ENCODE measurements at regions of chr2 and their contacts with region 1.

Region 1: DNA sequence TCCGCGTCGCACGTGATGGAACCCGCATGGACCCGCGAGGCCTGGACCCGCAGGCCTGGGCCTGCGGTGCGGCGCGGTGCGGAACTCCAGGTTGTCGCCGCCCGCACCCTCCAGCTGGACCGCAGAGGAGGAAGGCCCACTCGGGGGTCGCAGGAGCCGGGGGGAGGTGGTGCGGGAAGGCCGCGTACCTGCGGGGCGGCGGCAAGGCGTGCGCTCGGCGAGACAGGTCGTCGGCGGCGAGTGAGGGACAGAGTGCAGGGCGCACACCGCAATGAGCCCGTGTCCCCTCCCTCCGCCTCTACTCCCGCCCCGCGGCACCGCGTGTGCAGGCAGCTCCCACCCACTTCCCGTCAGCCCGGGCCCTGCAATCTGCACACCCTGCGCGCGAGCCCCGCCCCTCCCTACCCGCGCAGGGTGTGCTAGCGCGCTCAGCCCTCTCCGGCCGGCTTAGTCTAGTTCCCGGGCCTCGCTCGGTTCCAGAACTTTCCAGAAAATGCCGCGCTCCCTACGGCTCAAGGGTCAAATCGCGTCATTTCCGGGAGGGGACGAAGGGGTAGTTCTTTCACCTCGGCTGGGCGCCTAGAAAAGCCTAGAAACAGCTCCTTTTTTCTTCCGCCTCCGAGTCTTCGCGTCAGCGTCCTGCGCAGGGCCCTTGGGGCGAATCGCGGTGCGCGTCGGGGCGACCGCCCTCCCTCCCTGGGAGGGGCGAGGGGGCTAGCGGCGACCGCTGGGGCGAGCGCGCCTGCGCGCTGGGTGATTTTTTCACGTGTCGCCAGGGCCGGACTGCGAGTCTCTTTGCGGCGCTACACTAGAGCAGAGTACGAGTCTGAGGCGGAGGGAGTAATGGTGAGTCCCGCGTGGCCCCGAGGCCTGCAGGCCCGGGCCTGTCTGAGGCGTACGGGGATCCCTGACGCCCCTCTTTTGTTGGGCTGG is at the starts of genes HSPD1 and HSPE1:
- DNase-seq: peak; percentile 98
- H3K4me3 Mint-ChIP-seq: peak within 1 kb of the TSS; percentile 92
- H3K27ac Mint-ChIP-seq: peak within 1 kb of the TSS; percentile 97
- H3K4me1 Mint-ChIP-seq: peaks cover 60% of the 10 kb centered on the region
- H3K27me3 Mint-ChIP-seq: no peaks in the 10 kb centered on the region
- total RNA-seq, gene HSPD1: 227 to 229 TPM
- total RNA-seq, gene HSPE1: 85.9 to 92.6 TPM

Region 2: GRCh38 chr2:197515739-197516392 is 16.0 kb after region 1 on chr2 and contains the start of gene MOB4:
- CTCF ChIA-PET with region 1: interaction called, 30 read pairs
- POLR2A ChIA-PET with region 1: interaction called, 275 read pairs
- DNase-seq: peak; percentile 95
- H3K4me3 Mint-ChIP-seq: peak within 1 kb of the TSS; percentile 96
- H3K27ac Mint-ChIP-seq: peak within 1 kb of the TSS; percentile 81
- H3K4me1 Mint-ChIP-seq: peaks cover 33% of the 10 kb centered on the region
- H3K27me3 Mint-ChIP-seq: no peaks in the 10 kb centered on the region
- total RNA-seq, gene MOB4: 23.5 to 24.8 TPM

Region 3: DNA sequence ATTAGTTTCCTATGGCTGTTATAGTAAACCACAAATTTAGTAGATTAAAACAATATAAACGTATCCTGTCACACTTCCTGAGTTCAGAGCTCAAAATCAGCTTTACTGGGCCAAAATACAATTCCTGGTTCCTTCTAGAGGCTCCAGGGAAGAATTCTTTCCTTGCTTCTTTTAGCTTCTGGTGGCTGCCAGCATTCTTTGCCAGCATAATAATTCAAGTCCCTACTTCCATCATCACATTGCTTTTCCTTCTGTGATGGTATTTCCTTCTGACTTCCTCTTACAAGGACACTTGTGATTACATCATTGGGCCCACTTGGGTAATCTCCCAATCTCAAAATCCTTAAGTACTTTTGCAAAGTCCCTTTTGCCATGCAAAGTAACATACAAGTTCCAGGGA is 56.6 kb after region 1 on chr2:
- CTCF ChIA-PET with region 1: no interaction called
- POLR2A ChIA-PET with region 1: no interaction called
- DNase-seq: no peak
- H3K4me3 Mint-ChIP-seq: no peak overlapping the region
- H3K27ac Mint-ChIP-seq: no peak overlapping the region
- H3K4me1 Mint-ChIP-seq: no peaks in the 10 kb centered on the region
- H3K27me3 Mint-ChIP-seq: no peaks in the 10 kb centered on the region